GM12878 (cell line): ENCODE measurements at regions of chr2 and their contacts with region 1.

Region 1: GRCh38 chr2:134739879-134740301 is 21.1 kb upstream of the TMEM163 start:
- DNase-seq: peak; percentile 90
- ATAC-seq: peak; percentile 97
- H3K4me3 ChIP-seq: no peak overlapping the region
- H3K27ac ChIP-seq: peak overlapping the region; percentile 85
- H3K4me1 ChIP-seq: peaks cover 53% of the 10 kb centered on the region
- H3K27me3 ChIP-seq: no peaks in the 10 kb centered on the region
- CTCF ChIP-seq: no peak
- EP300 ChIP-seq: peak; percentile 68 to 94
- POLR2A ChIP-seq: peak; percentile 22; the same call in 1 of the 2 replicates
- RAD21 ChIP-seq: 0 out of 2 replicates have a peak, but pooled peaks have one; percentile 1

Region 2: DNA sequence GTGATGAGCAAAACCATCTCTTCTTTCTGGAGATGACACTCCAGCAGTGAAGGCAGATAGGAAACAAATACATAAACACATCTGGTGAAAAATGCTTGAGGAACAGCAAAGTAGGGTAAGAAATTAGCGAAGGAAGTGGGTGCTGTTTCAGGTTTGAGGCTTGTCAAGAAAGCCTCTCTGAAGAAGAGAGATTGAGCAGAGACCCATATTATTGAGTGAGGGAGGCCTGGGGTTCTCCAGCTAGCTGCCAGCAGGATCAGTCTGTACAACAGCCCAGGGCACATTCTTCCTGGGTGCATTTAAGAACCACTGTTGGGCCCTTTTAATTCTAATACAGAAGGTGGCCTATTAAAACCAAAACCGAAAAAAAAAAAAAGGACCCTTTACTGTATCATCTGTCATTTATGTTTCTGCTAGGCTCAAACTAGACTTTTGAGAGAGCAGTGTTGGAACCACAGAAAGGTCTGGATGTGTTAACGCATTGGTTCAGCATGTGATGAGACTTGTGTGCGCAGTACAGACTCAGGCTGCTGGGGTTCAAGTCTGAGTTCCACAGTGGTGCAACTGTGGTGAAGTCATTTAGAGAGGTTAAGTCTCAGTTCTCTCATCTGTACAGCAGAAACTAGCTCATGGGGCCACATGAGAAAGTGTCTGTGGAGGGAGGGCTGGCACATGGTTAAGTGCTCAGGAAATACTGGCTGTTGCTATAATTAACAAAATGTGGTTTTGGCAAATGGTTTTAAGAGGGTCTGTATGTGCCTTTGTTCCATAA is 457.1 kb before region 1 on chr2:
- CTCF ChIA-PET with region 1: no interaction called
- POLR2A ChIA-PET with region 1: no interaction called
- RAD21 ChIA-PET with region 1: no interaction called
- SMC1A ChIA-PET with region 1: no interaction called
- in situ Hi-C with region 1: no loop called
- intact Hi-C with region 1: no loop called
- DNase-seq: peak; percentile 96
- ATAC-seq: peak; percentile 91
- H3K4me3 ChIP-seq: peak overlapping the region; percentile 47
- H3K27ac ChIP-seq: peak overlapping the region; percentile 95
- H3K4me1 ChIP-seq: peaks cover 87% of the 10 kb centered on the region
- H3K27me3 ChIP-seq: no peaks in the 10 kb centered on the region
- CTCF ChIP-seq: no peak
- EP300 ChIP-seq: peak; percentile 89 to 90
- POLR2A ChIP-seq: 0 out of 2 replicates have a peak, but pooled peaks have one; percentile 40
- RAD21 ChIP-seq: no peak

Region 3: DNA sequence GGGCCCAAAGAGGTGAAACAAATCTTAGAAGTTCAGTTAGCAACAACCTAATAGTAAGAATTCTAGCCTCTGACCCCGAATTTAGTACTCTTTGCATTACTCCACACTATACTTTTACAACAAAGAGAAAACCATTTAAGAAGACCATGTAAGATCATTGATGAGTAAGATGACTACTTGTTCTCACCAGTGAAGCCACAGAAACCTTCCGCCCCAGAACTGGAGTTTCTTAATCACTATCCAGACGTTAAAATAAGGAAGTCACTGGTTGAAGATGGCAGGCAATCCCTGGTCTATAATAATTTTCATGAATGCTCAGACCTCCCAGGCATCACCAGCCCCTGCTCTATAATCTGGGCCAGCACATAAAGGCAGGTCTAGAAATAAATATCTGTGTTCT is 116.1 kb before region 1 on chr2:
- CTCF ChIA-PET with region 1: no interaction called
- POLR2A ChIA-PET with region 1: no interaction called
- RAD21 ChIA-PET with region 1: no interaction called
- SMC1A ChIA-PET with region 1: no interaction called
- in situ Hi-C with region 1: no loop called
- intact Hi-C with region 1: loop called (anchors 5 kb)
- DNase-seq: peak; percentile 83
- ATAC-seq: peak; percentile 91
- H3K4me3 ChIP-seq: no peak overlapping the region
- H3K27ac ChIP-seq: peak overlapping the region; percentile 88
- H3K4me1 ChIP-seq: peaks cover 21% of the 10 kb centered on the region
- H3K27me3 ChIP-seq: no peaks in the 10 kb centered on the region
- CTCF ChIP-seq: no peak
- EP300 ChIP-seq: peak; percentile 32 to 67; a peak in 2 of 4 replicates
- POLR2A ChIP-seq: no peak
- RAD21 ChIP-seq: 0 out of 2 replicates have a peak, but pooled peaks have one; percentile 4

Region 4: DNA sequence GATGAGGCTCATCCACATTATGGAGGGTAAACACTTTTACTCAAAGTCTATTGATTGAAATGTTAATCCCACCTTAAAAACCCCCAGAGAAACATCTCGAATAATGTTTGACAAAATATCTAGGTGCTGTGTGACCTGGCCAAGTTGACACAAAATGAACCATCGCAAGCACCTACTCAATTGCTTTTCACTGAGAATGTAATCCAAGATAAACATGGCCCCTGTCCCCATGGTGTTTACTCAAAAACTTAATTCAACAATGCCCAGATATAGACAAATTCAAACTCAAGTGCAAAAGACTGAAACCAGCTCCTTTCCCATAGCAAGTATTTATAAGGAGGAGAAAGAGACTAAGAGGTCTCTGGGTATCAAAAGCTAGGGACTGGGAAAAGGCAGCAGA is 83.5 kb after region 1 on chr2:
- CTCF ChIA-PET with region 1: no interaction called
- POLR2A ChIA-PET with region 1: no interaction called
- RAD21 ChIA-PET with region 1: no interaction called
- SMC1A ChIA-PET with region 1: no interaction called
- in situ Hi-C with region 1: no loop called
- intact Hi-C with region 1: loop called (anchors 5 kb)
- DNase-seq: no peak
- ATAC-seq: no peak
- H3K4me3 ChIP-seq: no peak overlapping the region
- H3K27ac ChIP-seq: no peak overlapping the region
- H3K4me1 ChIP-seq: no peaks in the 10 kb centered on the region
- H3K27me3 ChIP-seq: no peaks in the 10 kb centered on the region
- CTCF ChIP-seq: no peak
- EP300 ChIP-seq: no peak
- POLR2A ChIP-seq: no peak
- RAD21 ChIP-seq: no peak

Region 5: DNA sequence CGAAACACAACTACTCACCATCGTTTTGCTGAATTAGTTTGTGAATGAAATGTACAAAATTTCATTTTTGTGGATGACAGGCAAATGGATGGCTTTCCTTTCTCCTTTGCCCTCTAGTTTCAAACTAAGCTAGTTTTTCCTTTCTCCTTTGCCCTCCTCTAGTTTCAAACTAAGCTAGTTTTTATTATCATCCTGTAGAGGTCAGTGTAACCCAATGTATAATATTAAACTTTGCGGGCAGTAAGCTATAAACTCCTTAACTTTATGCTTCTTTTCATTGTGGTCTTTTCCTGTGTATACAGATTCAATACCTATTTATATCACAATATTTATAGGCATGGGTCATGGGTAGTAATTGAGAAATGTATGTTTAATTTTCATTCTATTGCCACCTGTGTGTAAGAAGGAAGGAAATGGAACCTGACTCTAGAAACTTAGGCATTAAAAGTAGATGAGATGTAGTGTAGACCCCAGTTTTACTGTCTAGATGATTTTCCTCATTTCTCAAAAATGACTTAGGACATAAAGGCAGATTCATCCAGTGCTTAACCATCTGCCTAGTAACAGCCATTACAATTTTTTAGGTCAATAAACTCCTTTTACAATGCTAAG is 249.2 kb after region 1 on chr2:
- CTCF ChIA-PET with region 1: no interaction called
- POLR2A ChIA-PET with region 1: no interaction called
- RAD21 ChIA-PET with region 1: no interaction called
- SMC1A ChIA-PET with region 1: no interaction called
- in situ Hi-C with region 1: no loop called
- intact Hi-C with region 1: no loop called
- DNase-seq: no peak
- ATAC-seq: peak; percentile 75
- H3K4me3 ChIP-seq: no peak overlapping the region
- H3K27ac ChIP-seq: no peak overlapping the region
- H3K4me1 ChIP-seq: no peaks in the 10 kb centered on the region
- H3K27me3 ChIP-seq: no peaks in the 10 kb centered on the region
- CTCF ChIP-seq: peak; percentile 26 to 47 (median 32); a peak in 5 of 6 replicates
- EP300 ChIP-seq: no peak
- POLR2A ChIP-seq: no peak
- RAD21 ChIP-seq: peak; percentile 59